ENCODE measurements at regions of chr18 and their contacts with region 1.

Region 1: DNA sequence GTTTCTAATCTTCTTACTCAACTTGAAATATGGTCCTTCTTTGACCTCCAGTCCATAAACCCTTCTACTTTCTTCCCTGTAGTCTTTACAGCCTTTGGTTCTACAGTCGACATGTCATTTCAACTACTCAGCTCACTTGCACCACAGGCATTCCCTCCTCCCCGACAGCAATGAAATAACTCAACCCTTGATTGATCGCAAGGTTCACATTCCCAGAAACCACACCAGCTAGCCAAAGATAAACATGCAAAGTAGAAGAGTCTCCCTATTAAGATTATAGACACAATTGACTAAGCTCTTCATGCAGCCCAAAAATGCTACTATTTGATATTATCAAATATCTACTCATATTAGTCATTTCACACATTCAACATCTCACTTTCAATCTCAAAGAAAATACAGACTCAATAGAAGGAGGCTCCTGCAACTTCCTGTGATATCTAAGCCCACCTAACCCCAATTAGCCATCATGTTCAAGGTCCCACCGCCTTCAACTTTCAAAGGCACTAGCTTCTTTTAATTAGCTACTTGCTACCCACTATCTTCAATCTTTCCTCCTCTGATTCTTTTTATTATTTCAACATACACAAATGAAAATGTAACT is 50.8 kb downstream of the RTTN start:
- DNase-seq: peak; percentile 94
- ATAC-seq: peak; percentile 95
- H3K4me3 ChIP-seq: no peak overlapping the region
- H3K27ac ChIP-seq: no peak overlapping the region
- H3K4me1 ChIP-seq: peaks cover 2% of the 10 kb centered on the region; the same call in 1 of the 2 replicates
- H3K27me3 ChIP-seq: no peaks in the 10 kb centered on the region
- CTCF ChIP-seq: no peak
- POLR2A ChIP-seq: no peak
- RAD21 ChIP-seq: no peak

Region 2: GRCh38 chr18:70135604-70136003 is 19.1 kb before region 1 on chr18:
- CTCF ChIA-PET with region 1: interaction called, 8 read pairs
- POLR2A ChIA-PET with region 1: no interaction called
- dilution Hi-C with region 1: no loop called
- in situ Hi-C with region 1: no loop called
- intact Hi-C with region 1: loop called (anchors 2 kb)
- DNase-seq: no peak
- ATAC-seq: no peak
- H3K4me3 ChIP-seq: no peak overlapping the region
- H3K27ac ChIP-seq: peak overlapping the region; percentile 71; the same call in 1 of the 2 replicates
- H3K4me1 ChIP-seq: peaks cover 9% of the 10 kb centered on the region
- H3K27me3 ChIP-seq: no peaks in the 10 kb centered on the region
- CTCF ChIP-seq: no peak
- POLR2A ChIP-seq: no peak
- RAD21 ChIP-seq: no peak

Measured in IMR-90 (cell line).